Activated CD4-positive, alpha-beta memory T cell treated with anti-CD3 and anti-CD28 coated beads for 36 hours (primary cell): ENCODE measurements at regions of chr12 and their contacts with region 1.

Region 1: GRCh38 chr12:121992059-121992879 is 29.4 kb upstream of the BCL7A start:
- DNase-seq: peak; percentile 85
- H3K4me3 Mint-ChIP-seq: peak overlapping the region; percentile 38
- H3K27ac Mint-ChIP-seq: peak overlapping the region; percentile 84
- H3K4me1 Mint-ChIP-seq: peaks cover 20% of the 10 kb centered on the region
- H3K27me3 Mint-ChIP-seq: peaks cover 3% of the 10 kb centered on the region

Region 2: DNA sequence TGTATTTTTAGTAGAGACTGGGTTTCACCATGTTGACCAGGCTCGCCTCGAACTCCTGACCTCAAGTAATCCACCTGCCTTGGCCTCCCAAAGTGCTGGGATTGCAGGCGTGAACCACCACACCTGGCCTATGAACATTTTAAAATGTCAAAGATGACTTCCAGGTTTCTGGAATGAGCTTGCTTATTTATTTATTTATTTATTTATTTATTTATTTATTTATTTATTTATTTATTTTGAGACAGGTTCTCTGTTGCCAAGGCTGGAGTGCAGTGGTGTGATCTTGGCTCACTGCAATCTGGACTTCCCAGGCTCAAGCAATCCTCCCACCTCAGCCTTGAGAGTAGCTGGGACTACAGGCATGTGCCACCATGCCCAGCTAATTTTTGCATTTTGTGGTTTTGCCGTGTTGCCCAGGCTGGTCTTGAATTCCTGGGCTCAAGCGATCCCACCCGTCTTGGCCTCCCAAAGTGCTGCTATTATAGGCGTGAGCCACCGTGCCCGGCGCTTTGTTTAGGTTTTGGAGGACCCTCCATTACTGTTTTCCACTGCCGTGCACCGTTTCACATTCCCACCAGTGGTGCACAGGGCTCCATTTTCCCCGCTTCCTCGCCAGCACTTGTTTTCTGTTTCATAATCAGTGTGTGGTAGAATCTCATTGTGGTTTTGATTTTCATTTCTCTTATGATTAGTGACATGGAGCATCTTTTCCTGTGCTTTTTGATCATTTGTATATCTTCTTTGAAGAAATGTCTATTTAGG is 80.3 kb before region 1 on chr12:
- CTCF ChIA-PET with region 1: interaction called, 9 read pairs
- POLR2A ChIA-PET with region 1: no interaction called
- intact Hi-C with region 1: loop called (anchors 2 kb)
- DNase-seq: peak; percentile 69
- H3K4me3 Mint-ChIP-seq: peak overlapping the region; percentile 31
- H3K27ac Mint-ChIP-seq: peak overlapping the region; percentile 66
- H3K4me1 Mint-ChIP-seq: peaks cover 12% of the 10 kb centered on the region
- H3K27me3 Mint-ChIP-seq: no peaks in the 10 kb centered on the region

Region 3: GRCh38 chr12:121917979-121918678 is 74.1 kb before region 1 on chr12 and contains the start of gene CFAP251:
- CTCF ChIA-PET with region 1: interaction called, 9 read pairs
- POLR2A ChIA-PET with region 1: interaction called, 4 read pairs
- intact Hi-C with region 1: loop called (anchors 1 kb)
- DNase-seq: peak; percentile 98
- H3K4me3 Mint-ChIP-seq: peak within 1 kb of the TSS; percentile 77
- H3K27ac Mint-ChIP-seq: peak within 1 kb of the TSS; percentile 84
- H3K4me1 Mint-ChIP-seq: peaks cover 14% of the 10 kb centered on the region
- H3K27me3 Mint-ChIP-seq: no peaks in the 10 kb centered on the region
- total RNA-seq, gene CFAP251: 1.3 to 1.6 TPM

Region 4: DNA sequence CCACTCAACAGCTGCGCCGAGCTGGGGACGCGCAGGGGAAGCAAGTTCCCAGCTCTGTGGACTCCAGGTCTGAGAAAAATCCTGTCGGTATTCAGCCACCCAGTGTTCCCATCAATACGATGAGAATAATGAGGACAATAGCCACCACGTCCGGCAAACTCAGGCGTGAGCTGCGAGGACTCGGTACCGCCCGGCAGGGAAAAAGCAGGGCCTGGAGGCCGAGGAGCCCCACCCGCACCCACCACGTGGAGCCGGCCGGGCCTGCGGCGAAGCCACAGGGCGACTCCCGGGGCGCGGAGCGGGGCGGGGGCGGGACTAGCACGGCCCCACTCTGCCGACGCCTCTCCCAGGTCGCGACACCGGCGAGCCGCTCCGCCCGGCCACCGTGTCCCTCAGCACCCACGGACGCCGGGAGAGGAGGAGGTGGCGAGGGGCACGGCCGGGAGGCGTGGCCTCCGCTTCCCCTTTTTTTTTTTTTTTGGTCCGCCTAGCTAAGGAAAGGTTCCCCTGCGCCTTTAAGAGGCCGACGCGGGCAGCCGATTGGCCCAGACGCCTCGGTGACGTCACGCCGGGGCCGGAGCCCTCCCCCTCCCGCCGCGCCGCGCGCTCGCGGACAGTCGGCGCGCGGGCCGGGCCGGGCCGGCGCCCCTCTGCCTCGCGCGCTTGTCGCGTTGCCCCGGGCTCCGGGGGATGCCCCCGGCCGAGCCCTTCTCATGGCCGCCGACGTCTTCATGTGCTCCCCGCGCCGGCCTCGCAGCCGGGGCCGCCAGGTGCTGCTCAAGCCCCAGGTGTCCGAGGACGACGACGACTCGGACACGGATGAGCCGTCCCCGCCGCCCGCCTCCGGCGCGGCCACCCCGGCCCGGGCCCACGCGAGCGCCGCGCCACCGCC is 86.1 kb after region 1 on chr12 and contains the start of gene MLXIP:
- CTCF ChIA-PET with region 1: no interaction called
- POLR2A ChIA-PET with region 1: interaction called, 5 read pairs
- intact Hi-C with region 1: loop called (anchors 2 kb)
- DNase-seq: peak; percentile 93
- H3K4me3 Mint-ChIP-seq: peak within 1 kb of the TSS; percentile 83
- H3K27ac Mint-ChIP-seq: peak within 1 kb of the TSS; percentile 8
- H3K4me1 Mint-ChIP-seq: peaks cover 45% of the 10 kb centered on the region
- H3K27me3 Mint-ChIP-seq: no peaks in the 10 kb centered on the region
- total RNA-seq, gene MLXIP: 17.5 to 19.6 TPM

Region 5: DNA sequence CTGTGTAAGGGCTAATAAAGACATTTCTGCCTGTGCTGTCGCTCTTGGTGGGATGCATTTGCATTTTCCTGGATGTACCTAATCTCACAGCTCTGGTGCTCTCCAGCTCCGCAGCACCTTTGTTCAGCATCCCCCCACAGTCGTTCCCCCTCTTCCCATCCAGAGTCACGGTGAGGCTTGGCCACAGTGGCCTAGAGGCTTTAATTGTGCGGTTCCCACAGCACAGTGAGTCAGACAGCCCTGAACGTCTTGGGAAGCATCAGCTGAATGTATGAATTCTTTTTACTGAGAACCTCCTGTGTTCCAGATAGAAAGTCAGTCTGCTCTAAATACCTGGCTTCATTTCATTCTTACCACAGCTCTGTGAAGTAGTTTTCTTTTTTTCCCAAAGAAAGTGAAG is 115.0 kb after region 1 on chr12:
- CTCF ChIA-PET with region 1: no interaction called
- POLR2A ChIA-PET with region 1: no interaction called
- intact Hi-C with region 1: loop called (anchors 1 kb)
- DNase-seq: no peak
- H3K4me3 Mint-ChIP-seq: no peak overlapping the region
- H3K27ac Mint-ChIP-seq: no peak overlapping the region
- H3K4me1 Mint-ChIP-seq: peaks cover 64% of the 10 kb centered on the region
- H3K27me3 Mint-ChIP-seq: no peaks in the 10 kb centered on the region

Region 6: DNA sequence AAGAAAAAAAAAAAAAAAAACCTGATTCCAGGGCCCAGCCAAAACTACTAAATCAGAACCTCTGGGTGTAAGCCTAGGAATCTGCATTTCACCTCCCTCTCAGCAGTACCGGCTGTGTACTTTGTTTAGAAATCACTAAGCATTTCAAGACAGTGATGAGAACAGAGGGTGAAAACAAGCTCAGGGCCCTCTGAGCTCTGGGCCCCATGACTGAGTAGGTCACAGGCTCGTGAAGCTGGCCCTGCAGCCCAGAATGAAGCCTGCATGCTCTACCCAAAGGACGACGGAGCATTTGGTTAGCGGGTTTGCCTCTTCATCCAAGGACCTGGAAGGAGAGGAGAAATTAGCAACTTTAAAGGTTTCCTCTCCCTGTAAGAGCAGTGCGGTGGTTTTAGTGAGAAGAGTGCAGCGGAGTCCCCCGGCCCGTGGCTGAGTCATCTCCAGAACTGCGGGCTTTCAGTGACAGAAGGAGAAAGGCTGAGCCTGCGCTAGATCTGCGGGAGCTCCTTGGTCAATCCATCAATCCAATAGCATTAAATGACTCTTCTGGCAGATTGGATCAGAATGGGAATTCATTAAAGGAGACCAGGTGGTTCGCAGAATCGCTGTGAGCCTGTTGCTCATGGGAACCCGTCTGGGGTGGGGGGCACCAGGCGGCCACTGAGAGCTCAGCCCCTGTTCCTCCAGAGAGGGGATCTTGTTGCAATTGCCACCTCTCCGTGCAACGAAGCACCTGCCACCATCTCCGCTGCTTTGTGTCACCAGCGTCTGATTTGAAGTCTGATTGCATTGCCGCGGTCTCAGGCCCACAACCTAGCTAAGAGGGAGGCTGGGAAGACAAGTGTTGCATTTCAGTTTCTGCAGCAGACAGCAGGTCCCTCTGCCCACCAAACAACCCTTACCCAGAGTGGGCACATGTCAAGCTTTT is 174.4 kb after region 1 on chr12:
- CTCF ChIA-PET with region 1: interaction called, 3 read pairs
- POLR2A ChIA-PET with region 1: interaction called, 6 read pairs
- intact Hi-C with region 1: loop called (anchors 2 kb)
- DNase-seq: peak; percentile 91
- H3K4me3 Mint-ChIP-seq: no peak overlapping the region
- H3K27ac Mint-ChIP-seq: peak overlapping the region; percentile 76
- H3K4me1 Mint-ChIP-seq: peaks cover 20% of the 10 kb centered on the region
- H3K27me3 Mint-ChIP-seq: peaks cover 19% of the 10 kb centered on the region